Breast epithelium (tissue), 4 donors: ENCODE measurements at regions of chr2 and their contacts with region 1.

Region 1: GRCh38 chr2:74482801-74483674 is at the starts of genes CCDC142 and TTC31:
- DNase-seq: peak; percentile 96 to 98
- H3K4me3 ChIP-seq: peak within 1 kb of the TSS; percentile 71 to 99 (median 89)
- H3K27ac ChIP-seq: peak within 1 kb of the TSS; percentile 90 to 94
- H3K4me1 ChIP-seq: peaks cover 8 to 14% of the 10 kb centered on the region in 2 donors
- H3K27me3 ChIP-seq: no peaks in the 10 kb centered on the region
- CTCF ChIP-seq: peak; percentile 81 to 91 (median 84)
- POLR2A ChIP-seq: no peak
- total RNA-seq, gene CCDC142: 10.6 to 38.0 (median 27.1) TPM
- total RNA-seq, gene TTC31: 21.6 to 32.0 (median 27.8) TPM

Region 2: DNA sequence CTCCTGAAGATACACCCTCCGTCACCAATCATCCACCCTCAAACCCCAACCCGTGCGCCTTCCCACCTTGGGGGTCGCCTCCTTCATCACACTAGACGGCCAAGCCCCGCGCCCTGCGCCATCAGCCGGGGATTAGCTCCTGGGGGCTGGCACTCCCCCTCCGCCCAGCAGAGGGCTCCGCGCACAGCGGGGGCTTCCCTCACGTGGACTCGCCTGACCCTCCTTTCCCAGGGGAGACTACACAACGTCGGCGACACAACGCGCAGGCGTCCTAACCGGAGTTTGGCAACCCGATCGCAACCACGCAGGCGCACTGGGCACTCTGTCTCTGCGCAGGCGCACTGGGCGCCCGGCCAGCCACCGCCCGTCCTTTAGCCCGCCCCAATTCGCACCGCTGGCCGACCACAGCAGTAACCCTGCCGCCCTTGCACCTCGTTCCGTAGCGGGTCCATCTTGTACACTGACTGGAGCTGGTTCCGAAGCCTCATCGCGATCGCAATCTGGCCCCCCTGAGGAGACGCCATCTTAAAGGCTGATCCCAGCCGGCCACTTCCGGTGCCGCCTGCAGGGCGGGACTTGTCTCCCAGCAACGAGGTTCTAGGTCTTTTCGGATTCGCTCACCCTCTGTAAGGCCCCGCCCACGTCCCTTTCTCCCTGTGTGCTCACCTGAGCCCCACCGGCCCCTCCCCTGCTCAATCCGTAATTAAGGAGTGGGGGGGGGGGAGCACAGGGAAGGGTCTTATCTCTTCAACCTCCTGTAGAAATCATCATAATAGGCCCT is 24.3 kb after region 1 on chr2 and contains the start of gene PCGF1:
- intact Hi-C with region 1: no loop called
- DNase-seq: peak; percentile 98 to 99
- H3K4me3 ChIP-seq: peak within 1 kb of the TSS; percentile 63 to 87 (median 82)
- H3K27ac ChIP-seq: peak within 1 kb of the TSS; percentile 99
- H3K4me1 ChIP-seq: peaks cover 0 to 19% of the 10 kb centered on the region in 2 donors
- H3K27me3 ChIP-seq: peaks cover 0 to 5% of the 10 kb centered on the region in 2 donors
- CTCF ChIP-seq: peak in 1 of 3 donors; percentile 17
- POLR2A ChIP-seq: peak; percentile 13
- total RNA-seq, gene PCGF1: 18.3 to 20.3 (median 19.8) TPM

Region 3: DNA sequence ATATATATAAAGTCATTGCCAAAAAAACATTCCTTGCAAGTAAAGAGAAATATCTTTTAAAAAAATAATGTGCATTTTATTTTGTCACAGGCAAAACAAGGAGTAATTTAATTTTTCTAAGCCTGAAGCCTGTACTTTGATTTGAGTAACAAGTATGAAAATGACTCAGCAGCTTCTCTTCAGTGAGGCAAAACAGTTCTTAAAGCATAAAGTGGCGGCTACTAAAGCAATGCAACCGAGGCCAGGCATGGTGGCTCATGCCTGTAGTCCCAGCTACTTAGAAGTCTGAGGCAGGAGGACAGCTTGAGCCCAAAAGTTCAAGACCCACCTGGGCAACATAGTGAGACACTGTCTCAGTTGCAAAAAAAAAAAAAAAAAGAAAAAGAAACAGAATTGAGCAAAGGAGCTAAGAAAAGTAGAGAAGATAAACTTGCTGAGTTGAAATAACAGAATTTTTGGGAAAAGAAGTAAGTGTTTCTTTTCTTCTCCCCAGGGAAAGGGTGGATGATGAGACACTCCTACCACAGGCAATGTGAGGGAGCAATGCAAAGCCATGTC is 101.1 kb after region 1 on chr2:
- intact Hi-C with region 1: loop called (anchors 5 kb)
- DNase-seq: no peak
- H3K4me3 ChIP-seq: no peak overlapping the region
- H3K27ac ChIP-seq: no peak overlapping the region
- H3K4me1 ChIP-seq: no peaks in the 10 kb centered on the region
- H3K27me3 ChIP-seq: no peaks in the 10 kb centered on the region
- CTCF ChIP-seq: no peak
- POLR2A ChIP-seq: no peak